Sigmoid colon (tissue), 7 donors: ENCODE measurements at regions of chr1 and their contacts with region 1.

Region 1: GRCh38 chr1:210311726-210312493 is 16.8 kb upstream of the HHAT start:
- DNase-seq: no peak
- H3K4me3 ChIP-seq: peak overlapping the region in 3 of 4 donors; percentile 37 to 50 (median 46)
- H3K27ac ChIP-seq: peak overlapping the region; percentile 56 to 70 (median 64)
- H3K4me1 ChIP-seq: peaks cover 0 to 14% (median 9%) of the 10 kb centered on the region in 4 donors
- H3K27me3 ChIP-seq: no peaks in the 10 kb centered on the region
- CTCF ChIP-seq: no peak
- EP300 ChIP-seq: no peak
- POLR2A ChIP-seq: no peak

Region 2: DNA sequence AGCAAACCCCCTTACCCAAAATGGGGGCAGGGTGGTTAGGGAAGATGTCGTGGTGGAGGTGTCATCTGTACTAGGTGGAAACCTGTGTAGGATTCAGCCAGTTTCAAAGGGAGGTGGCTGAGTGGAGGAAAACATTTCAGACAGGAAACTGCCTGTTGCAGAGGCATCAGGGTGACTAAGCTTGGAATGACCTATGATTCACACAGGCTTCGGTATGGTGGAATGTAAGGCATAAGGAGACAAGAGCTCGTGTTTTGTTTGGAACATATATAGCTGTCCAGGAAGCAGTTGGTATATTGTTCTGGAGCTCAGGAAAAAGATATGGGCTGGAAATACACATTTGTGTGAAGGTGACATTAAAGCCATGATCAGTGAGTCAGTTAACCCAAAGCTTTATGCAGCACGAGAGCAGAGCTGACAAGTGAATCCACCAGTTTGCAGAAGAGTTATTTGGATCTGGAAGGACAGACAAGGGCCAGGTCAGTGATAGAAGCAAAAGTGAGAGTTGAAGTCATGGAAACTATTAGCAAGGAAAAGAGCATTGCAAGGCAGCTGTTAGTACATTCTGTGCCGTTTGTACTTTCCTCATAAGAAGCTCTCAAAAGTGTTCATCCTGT is 471.9 kb before region 1 on chr1:
- intact Hi-C with region 1: no loop called
- DNase-seq: no peak
- H3K4me3 ChIP-seq: no peak overlapping the region
- H3K27ac ChIP-seq: peak overlapping the region; percentile 41 to 75 (median 60)
- H3K4me1 ChIP-seq: peaks cover 0 to 26% (median 16%) of the 10 kb centered on the region in 4 donors
- H3K27me3 ChIP-seq: no peaks in the 10 kb centered on the region
- CTCF ChIP-seq: no peak
- EP300 ChIP-seq: peak in 3 of 4 donors; percentile 24 to 56 (median 42)
- POLR2A ChIP-seq: no peak

Region 3: GRCh38 chr1:209860293-209860881 is 451.5 kb before region 1 on chr1:
- intact Hi-C with region 1: loop called (anchors 5 kb)
- DNase-seq: peak; percentile 80
- H3K4me3 ChIP-seq: no peak overlapping the region
- H3K27ac ChIP-seq: no peak overlapping the region
- H3K4me1 ChIP-seq: no peaks in the 10 kb centered on the region
- H3K27me3 ChIP-seq: peaks cover 0 to 6% (median 0%) of the 10 kb centered on the region in 3 donors
- CTCF ChIP-seq: peak; percentile 15 to 87 (median 64)
- EP300 ChIP-seq: no peak
- POLR2A ChIP-seq: no peak

Region 4: GRCh38 chr1:210143465-210144062 is 168.3 kb before region 1 on chr1:
- intact Hi-C with region 1: loop called (anchors 2 kb)
- DNase-seq: peak; percentile 83
- H3K4me3 ChIP-seq: no peak overlapping the region
- H3K27ac ChIP-seq: no peak overlapping the region
- H3K4me1 ChIP-seq: no peaks in the 10 kb centered on the region
- H3K27me3 ChIP-seq: no peaks in the 10 kb centered on the region
- CTCF ChIP-seq: peak; percentile 21 to 61 (median 48)
- EP300 ChIP-seq: no peak
- POLR2A ChIP-seq: no peak

Region 5: DNA sequence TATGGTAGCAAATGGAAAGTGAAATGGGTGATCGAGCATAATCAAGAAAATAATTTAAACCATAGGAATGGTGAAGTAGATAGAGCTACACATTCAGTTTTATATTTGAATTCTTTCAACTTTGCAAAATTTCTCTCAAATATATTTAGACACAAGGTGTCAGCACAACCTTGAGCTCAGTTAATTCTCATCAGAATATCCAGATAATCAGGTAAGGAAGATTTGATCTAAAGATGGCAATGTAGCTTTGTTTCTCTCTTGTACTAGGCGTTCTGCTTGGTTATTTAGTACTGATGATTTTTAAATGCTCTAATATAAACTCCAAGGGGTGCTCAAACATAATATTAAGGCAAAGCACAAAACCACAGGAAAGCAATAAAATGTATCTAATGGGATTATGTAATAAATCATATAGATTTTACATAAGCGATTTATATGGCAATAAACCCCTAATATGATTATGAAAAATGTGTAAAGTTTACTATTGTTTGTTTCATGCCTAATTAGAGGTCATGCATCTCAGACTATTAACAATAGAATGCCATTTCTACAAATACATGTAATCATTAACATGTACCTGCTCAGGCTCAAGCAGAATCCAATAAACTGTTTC is 111.7 kb before region 1 on chr1:
- intact Hi-C with region 1: loop called (anchors 2 kb)
- DNase-seq: no peak
- H3K4me3 ChIP-seq: no peak overlapping the region
- H3K27ac ChIP-seq: no peak overlapping the region
- H3K4me1 ChIP-seq: no peaks in the 10 kb centered on the region
- H3K27me3 ChIP-seq: no peaks in the 10 kb centered on the region
- CTCF ChIP-seq: peak in 1 of 4 experiments; percentile 40
- EP300 ChIP-seq: no peak
- POLR2A ChIP-seq: no peak

Region 6: GRCh38 chr1:210262167-210262896 is 49.6 kb before region 1 on chr1:
- intact Hi-C with region 1: loop called (anchors 5 kb)
- DNase-seq: peak; percentile 69
- H3K4me3 ChIP-seq: no peak overlapping the region
- H3K27ac ChIP-seq: peak overlapping the region; percentile 69 to 80 (median 72)
- H3K4me1 ChIP-seq: peaks cover 0 to 69% (median 55%) of the 10 kb centered on the region in 4 donors
- H3K27me3 ChIP-seq: no peaks in the 10 kb centered on the region
- CTCF ChIP-seq: no peak
- EP300 ChIP-seq: no peak
- POLR2A ChIP-seq: no peak

Region 7: GRCh38 chr1:210633636-210634035 is 321.7 kb after region 1 on chr1:
- intact Hi-C with region 1: no loop called
- DNase-seq: no peak
- H3K4me3 ChIP-seq: no peak overlapping the region
- H3K27ac ChIP-seq: no peak overlapping the region
- H3K4me1 ChIP-seq: peaks cover 0 to under 1% (median 0%) of the 10 kb centered on the region in 4 donors
- H3K27me3 ChIP-seq: no peaks in the 10 kb centered on the region
- CTCF ChIP-seq: no peak
- EP300 ChIP-seq: no peak
- POLR2A ChIP-seq: no peak